ENCODE measurements at regions of chr5 and their contacts with region 1.

Region 1: GRCh38 chr5:150544611-150545219 is 36.8 kb downstream of the NDST1 start:
- DNase-seq: peak; percentile 55 to 63 (median 57)
- H3K4me3 ChIP-seq: no peak overlapping the region
- H3K27ac ChIP-seq: no peak overlapping the region
- H3K4me1 ChIP-seq: peaks cover 0 to 19% (median 9%) of the 10 kb centered on the region in 4 experiments
- H3K27me3 ChIP-seq: no peaks in the 10 kb centered on the region

Region 2: GRCh38 chr5:150377964-150378694 is 166.6 kb before region 1 on chr5:
- CTCF ChIA-PET with region 1: no interaction called
- POLR2A ChIA-PET with region 1: no interaction called
- DNase-seq: no peak
- H3K4me3 ChIP-seq: no peak overlapping the region
- H3K27ac ChIP-seq: no peak overlapping the region
- H3K4me1 ChIP-seq: no peaks in the 10 kb centered on the region
- H3K27me3 ChIP-seq: no peaks in the 10 kb centered on the region

Region 3: DNA sequence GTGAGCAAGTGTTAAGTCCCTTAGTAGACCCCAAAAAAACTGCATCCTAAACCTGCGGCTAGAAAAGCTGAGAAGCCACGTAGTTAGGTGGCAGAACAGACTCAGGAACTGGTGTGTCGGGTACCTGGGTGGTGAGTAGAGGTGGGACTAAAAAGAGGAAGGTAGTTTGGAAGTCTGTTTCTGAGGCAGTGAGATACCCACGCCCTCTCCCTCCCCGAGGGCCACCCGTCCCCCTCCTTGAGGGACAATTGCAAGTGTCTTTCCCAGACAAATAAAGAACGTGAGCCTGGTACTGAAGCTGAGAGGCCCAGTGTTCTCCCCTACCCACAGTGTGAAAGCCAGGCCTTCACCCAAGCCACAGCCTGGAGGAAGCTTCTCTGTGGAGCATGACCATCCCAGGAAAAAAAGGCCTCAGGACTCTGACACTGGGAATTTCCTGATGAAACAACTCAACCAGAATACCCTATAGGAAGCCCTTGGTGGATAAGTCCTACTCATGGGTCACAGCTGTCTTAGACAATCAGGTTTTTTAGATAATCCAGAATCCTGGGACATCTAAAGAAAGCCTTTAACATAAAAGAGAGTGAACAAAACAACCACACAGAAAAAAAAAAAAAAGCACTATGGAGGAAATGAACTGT is 125.0 kb before region 1 on chr5:
- CTCF ChIA-PET with region 1: no interaction called
- POLR2A ChIA-PET with region 1: no interaction called
- DNase-seq: peak in 2 of 3 donors; percentile 77 to 82
- H3K4me3 ChIP-seq: peak overlapping the region in 2 of 7 experiments; percentile 28 to 30
- H3K27ac ChIP-seq: peak overlapping the region in 1 of 2 experiments; percentile 52
- H3K4me1 ChIP-seq: peaks cover 3 to 15% (median 10%) of the 10 kb centered on the region in 4 experiments
- H3K27me3 ChIP-seq: no peaks in the 10 kb centered on the region

Region 4: GRCh38 chr5:150532996-150533395 is 11.7 kb before region 1 on chr5:
- CTCF ChIA-PET with region 1: interaction called, 11 read pairs
- POLR2A ChIA-PET with region 1: no interaction called
- DNase-seq: no peak
- H3K4me3 ChIP-seq: no peak overlapping the region
- H3K27ac ChIP-seq: no peak overlapping the region
- H3K4me1 ChIP-seq: no peaks in the 10 kb centered on the region
- H3K27me3 ChIP-seq: no peaks in the 10 kb centered on the region

Region 5: DNA sequence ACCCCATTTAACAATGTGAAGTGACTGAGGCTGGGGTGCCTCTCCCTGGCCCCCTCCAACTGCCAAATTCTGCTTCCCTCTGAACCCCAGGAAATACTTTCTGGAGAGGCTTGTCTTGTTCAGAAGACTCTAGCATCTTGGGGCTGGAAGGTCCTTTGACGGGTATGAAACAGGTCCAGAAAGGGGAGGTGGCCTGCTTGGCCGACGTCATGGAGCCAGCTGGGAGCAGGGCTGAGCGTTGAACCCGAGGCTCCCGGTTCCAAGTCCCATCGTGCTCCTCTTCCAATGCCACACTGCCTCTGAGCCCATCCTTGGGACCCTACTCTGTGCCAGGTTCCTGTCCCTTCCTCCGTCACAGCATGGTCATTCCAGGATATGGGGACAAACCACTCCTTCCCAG is 10.1 kb after region 1 on chr5:
- CTCF ChIA-PET with region 1: interaction called, 48 read pairs
- POLR2A ChIA-PET with region 1: no interaction called
- DNase-seq: no peak
- H3K4me3 ChIP-seq: no peak overlapping the region
- H3K27ac ChIP-seq: no peak overlapping the region
- H3K4me1 ChIP-seq: peaks cover 1 to 52% (median 27%) of the 10 kb centered on the region in 4 experiments
- H3K27me3 ChIP-seq: no peaks in the 10 kb centered on the region